GM12878 (cell line): ENCODE measurements at regions of chr16 and their contacts with region 1.

Region 1: DNA sequence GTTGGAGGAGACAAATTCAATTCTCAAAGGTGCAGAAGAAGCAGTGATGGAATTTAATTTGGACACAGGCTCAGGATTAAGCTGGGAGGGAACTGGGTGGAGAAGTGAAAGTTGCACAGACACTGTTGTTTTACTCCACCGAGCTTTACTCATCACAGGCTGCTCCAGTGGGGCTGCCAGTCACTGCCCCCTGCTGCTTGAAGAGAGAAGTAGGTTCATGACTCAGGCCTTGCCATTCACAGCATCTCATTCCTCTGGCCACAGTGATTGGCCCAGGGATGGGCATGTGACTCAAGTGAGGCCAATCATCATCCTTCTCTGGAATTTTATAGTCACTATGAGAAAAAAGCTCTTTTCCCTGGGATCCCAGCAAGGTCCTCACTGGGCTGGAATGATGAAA is 11.8 kb downstream of the GNAO1 start:
- DNase-seq: no peak
- ATAC-seq: peak; percentile 85
- H3K4me3 ChIP-seq: no peak overlapping the region
- H3K27ac ChIP-seq: no peak overlapping the region
- H3K4me1 ChIP-seq: peaks cover 22% of the 10 kb centered on the region
- H3K27me3 ChIP-seq: no peaks in the 10 kb centered on the region
- CTCF ChIP-seq: peak; percentile 37 to 56 (median 46); a peak in 5 of 6 replicates
- EP300 ChIP-seq: no peak
- POLR2A ChIP-seq: no peak
- RAD21 ChIP-seq: peak; percentile 53

Region 2: DNA sequence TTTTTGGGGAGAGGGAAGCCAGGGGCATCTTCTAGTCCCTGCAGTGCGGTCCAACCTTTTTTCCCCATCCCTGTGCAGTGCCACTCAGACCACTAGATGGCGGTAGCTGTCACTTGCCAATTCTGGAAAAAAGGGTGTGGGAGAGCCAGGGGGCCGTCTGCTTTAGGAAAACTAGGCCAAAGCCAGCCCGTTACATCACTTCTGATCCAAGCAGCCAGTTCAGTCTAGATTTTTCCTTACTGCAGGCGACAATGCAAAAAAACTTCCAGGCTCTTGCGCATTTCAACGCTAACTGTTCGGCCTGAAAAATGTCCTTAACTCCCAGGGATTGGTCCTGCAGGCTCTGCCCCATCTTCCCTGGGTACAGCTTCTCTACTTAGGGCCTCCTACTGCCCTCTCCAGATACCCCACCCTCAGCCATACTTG is 258.7 kb before region 1 on chr16:
- CTCF ChIA-PET with region 1: interaction called, 34 read pairs
- POLR2A ChIA-PET with region 1: no interaction called
- RAD21 ChIA-PET with region 1: interaction called, 16 read pairs
- SMC1A ChIA-PET with region 1: interaction called, 8 read pairs
- in situ Hi-C with region 1: loop called (anchors 5 kb)
- intact Hi-C with region 1: loop called (anchors 1 kb)
- DNase-seq: no peak
- ATAC-seq: peak; percentile 84
- H3K4me3 ChIP-seq: no peak overlapping the region
- H3K27ac ChIP-seq: no peak overlapping the region
- H3K4me1 ChIP-seq: no peaks in the 10 kb centered on the region
- H3K27me3 ChIP-seq: peaks cover 0 to 2% of the 10 kb centered on the region in 2 experiments; a peak in 2 of 4 replicates
- CTCF ChIP-seq: peak; percentile 72 to 94 (median 93)
- EP300 ChIP-seq: no peak
- POLR2A ChIP-seq: no peak
- RAD21 ChIP-seq: peak; percentile 79

Region 3: GRCh38 chr16:55949518-55949917 is 253.5 kb before region 1 on chr16:
- CTCF ChIA-PET with region 1: interaction called, 34 read pairs
- POLR2A ChIA-PET with region 1: no interaction called
- RAD21 ChIA-PET with region 1: interaction called, 16 read pairs
- SMC1A ChIA-PET with region 1: interaction called, 3 read pairs
- in situ Hi-C with region 1: loop called (anchors 5 kb)
- intact Hi-C with region 1: loop called (anchors 1 kb)
- DNase-seq: no peak
- ATAC-seq: no peak
- H3K4me3 ChIP-seq: no peak overlapping the region
- H3K27ac ChIP-seq: no peak overlapping the region
- H3K4me1 ChIP-seq: no peaks in the 10 kb centered on the region
- H3K27me3 ChIP-seq: peaks cover 0 to 2% of the 10 kb centered on the region in 2 experiments; a peak in 2 of 4 replicates
- CTCF ChIP-seq: no peak
- EP300 ChIP-seq: no peak
- POLR2A ChIP-seq: no peak
- RAD21 ChIP-seq: no peak

Region 4: DNA sequence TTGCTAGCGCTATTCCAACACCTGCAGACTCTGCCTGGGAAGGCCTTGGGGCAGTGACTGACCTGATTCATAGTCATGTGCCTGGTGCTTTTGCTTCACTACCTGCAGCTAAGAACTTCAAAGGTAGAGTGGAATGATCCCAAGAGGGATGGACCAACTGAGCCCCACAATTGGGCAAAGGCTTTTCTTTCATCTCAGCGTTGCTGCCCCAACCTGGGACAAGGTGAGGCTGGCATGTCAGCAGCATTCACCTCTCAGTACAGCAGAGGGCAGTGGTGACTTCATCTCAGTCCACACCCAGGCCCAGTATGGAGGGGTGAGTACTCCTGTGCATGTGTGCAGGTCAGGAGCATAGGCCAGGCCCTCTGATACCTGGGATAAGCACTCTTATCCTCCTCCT is 161.4 kb before region 1 on chr16:
- CTCF ChIA-PET with region 1: interaction called, 6 read pairs
- POLR2A ChIA-PET with region 1: no interaction called
- RAD21 ChIA-PET with region 1: no interaction called
- SMC1A ChIA-PET with region 1: no interaction called
- in situ Hi-C with region 1: no loop called
- intact Hi-C with region 1: loop called (anchors 2 kb)
- DNase-seq: no peak
- ATAC-seq: peak; percentile 90
- H3K4me3 ChIP-seq: no peak overlapping the region
- H3K27ac ChIP-seq: no peak overlapping the region
- H3K4me1 ChIP-seq: no peaks in the 10 kb centered on the region
- H3K27me3 ChIP-seq: no peaks in the 10 kb centered on the region
- CTCF ChIP-seq: peak; percentile 38 to 49 (median 44); a peak in 5 of 6 replicates
- EP300 ChIP-seq: no peak
- POLR2A ChIP-seq: no peak
- RAD21 ChIP-seq: peak; percentile 40

Region 5: DNA sequence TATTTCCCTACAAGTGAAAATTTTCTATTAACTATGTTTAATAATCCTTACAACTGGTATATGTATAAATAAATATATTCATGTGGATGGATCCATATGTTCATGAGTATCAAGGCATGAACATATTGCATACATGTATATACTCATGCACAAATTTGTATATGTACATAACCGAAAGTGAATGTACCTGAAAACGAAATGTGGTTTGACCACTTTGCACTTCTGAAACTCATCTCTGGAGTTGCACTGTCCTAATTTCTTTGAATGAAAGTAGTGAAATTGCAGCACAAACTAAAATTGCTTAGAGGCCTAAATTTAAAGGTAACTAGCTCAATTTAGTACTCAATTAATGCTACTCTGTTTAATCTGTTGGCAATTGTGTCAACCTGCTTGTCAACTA is 39.1 kb before region 1 on chr16:
- CTCF ChIA-PET with region 1: interaction called, 3 read pairs
- POLR2A ChIA-PET with region 1: no interaction called
- RAD21 ChIA-PET with region 1: no interaction called
- SMC1A ChIA-PET with region 1: no interaction called
- in situ Hi-C with region 1: no loop called
- intact Hi-C with region 1: loop called (anchors 2 kb)
- DNase-seq: peak; percentile 32
- ATAC-seq: peak; percentile 64
- H3K4me3 ChIP-seq: no peak overlapping the region
- H3K27ac ChIP-seq: no peak overlapping the region
- H3K4me1 ChIP-seq: peaks cover 8% of the 10 kb centered on the region
- H3K27me3 ChIP-seq: no peaks in the 10 kb centered on the region; a peak in 1 of 4 replicates
- CTCF ChIP-seq: no peak
- EP300 ChIP-seq: no peak
- POLR2A ChIP-seq: no peak
- RAD21 ChIP-seq: no peak